ENCODE measurements at regions of chr9 and their contacts with region 1.

Region 1: GRCh38 chr9:98315551-98316060 is 60.2 kb upstream of the TBC1D2 start:
- DNase-seq: peak; percentile 79
- H3K4me3 ChIP-seq: no peak overlapping the region
- H3K27ac ChIP-seq: no peak overlapping the region
- H3K4me1 ChIP-seq: no peaks in the 10 kb centered on the region
- H3K27me3 ChIP-seq: no peaks in the 10 kb centered on the region
- CTCF ChIP-seq: peak; percentile 89

Region 2: GRCh38 chr9:98775831-98776441 is 460.3 kb after region 1 on chr9:
- intact Hi-C with region 1: loop called (anchors 5 kb)
- DNase-seq: peak; percentile 34
- H3K4me3 ChIP-seq: no peak overlapping the region
- H3K27ac ChIP-seq: no peak overlapping the region
- H3K4me1 ChIP-seq: no peaks in the 10 kb centered on the region
- H3K27me3 ChIP-seq: no peaks in the 10 kb centered on the region
- CTCF ChIP-seq: peak; percentile 22

Region 3: DNA sequence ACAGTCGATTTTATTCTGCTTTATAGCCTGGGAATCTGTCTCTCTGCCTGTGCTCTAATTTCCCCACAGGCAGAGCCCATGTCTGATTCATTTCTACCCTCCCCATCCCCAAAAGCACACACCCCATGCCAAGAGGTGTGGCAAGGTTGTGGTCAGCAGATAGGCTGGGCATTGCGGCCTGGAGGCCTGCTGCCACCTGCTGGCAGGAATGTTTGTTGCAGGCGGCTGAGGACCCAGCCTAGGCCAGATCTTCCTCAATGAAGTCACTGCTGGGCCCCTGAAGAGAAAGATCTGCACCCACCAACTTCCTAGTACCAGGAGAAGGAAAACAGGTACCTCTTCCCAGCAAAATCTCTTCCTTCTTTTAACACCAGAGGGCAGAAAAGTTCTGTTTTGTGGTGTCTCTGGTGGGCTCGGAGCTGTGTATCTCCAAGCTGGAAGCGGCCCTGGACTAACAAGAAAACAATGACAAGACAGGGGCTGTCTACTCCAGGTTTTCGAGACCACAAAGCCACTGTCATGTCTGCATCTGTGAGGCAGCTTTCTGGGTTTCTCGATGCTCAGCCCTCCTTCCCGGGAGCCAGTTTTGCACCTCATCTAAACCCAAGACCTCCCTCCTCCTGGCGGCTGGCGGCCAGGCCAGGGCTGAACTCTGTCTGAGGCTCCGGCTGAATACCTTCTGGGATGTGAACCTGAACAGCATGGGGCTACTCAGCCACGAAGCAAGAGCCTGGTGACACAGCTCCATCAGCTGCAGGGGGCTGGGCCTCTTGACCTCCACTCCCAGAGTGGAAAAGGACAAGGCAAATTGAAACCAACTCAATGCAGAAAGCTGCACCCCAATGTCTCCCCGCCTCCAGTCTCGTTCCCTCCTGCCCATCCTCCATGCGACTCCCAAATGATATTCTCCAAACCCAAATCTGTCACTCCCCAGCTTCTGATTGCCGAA is 475.8 kb after region 1 on chr9:
- intact Hi-C with region 1: loop called (anchors 5 kb)
- DNase-seq: peak; percentile 83
- H3K4me3 ChIP-seq: no peak overlapping the region
- H3K27ac ChIP-seq: no peak overlapping the region
- H3K4me1 ChIP-seq: no peaks in the 10 kb centered on the region
- H3K27me3 ChIP-seq: no peaks in the 10 kb centered on the region
- CTCF ChIP-seq: peak; percentile 99

Measured in colonic mucosa (tissue), 4 donors.